Mammary epithelial cell (primary cell): ENCODE measurements at regions of chr21 and their contacts with region 1.

Region 1: GRCh38 chr21:34582506-34583150 is 32.3 kb downstream of the RCAN1 start:
- DNase-seq: peak; percentile 88
- H3K4me3 ChIP-seq: no peak overlapping the region
- H3K27ac ChIP-seq: peak overlapping the region; percentile 47
- H3K4me1 ChIP-seq: peaks cover 45% of the 10 kb centered on the region
- H3K27me3 ChIP-seq: no peaks in the 10 kb centered on the region
- CTCF ChIP-seq: peak; percentile 53 to 70

Region 2: DNA sequence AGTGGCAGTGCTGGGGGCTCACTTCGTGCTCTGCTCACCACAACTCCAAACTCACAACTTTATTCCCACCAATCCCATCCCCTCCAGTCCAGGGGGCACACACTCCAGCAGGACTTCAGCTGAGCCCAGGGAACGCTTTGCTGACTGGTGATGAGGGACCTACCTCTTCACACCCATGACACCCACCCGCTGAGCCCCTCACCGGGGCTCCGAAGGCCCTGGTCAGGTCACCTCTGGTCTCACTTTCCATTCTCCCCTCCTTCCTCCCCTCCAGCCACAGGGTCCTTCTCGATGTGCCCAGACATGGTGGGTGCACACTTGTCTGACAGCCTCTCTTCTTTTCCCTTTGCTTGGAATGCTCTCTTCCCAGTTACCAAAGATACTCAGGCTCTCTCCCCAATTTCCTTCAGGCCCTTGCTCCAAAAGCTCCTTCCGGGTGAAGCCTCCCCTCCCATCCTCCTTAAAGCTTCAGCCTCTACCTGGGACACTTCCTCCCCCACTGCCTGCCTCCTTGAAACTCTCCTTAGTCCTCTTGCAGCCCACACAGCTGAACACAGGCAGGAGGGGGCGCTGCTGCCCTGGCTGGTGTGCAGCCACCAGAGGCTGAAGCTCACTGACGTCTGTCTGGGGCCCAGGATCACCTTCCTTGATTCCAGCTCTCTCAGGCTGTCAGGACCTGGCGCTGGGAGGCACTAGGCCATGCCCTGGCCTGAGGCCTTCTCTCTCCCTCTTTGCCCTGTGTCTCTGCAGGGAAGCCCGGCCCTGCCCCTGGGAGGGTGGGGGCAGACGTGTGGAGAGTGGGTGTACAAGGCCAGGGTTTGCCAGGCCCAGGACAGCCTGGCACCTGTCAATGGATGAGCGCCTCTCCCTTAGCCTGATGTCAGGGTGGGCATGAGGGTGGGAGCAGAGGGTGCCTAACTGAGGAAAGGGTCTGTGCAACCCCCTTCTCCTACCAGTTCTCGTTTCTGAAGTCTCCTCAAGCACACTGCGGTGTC is 72.2 kb before region 1 on chr21:
- CTCF ChIA-PET with region 1: interaction called, 32 read pairs
- dilution Hi-C with region 1: no loop called
- in situ Hi-C with region 1: no loop called
- intact Hi-C with region 1: loop called (anchors 1 kb)
- DNase-seq: peak; percentile 39
- H3K4me3 ChIP-seq: no peak overlapping the region
- H3K27ac ChIP-seq: no peak overlapping the region
- H3K4me1 ChIP-seq: no peaks in the 10 kb centered on the region
- H3K27me3 ChIP-seq: no peaks in the 10 kb centered on the region
- CTCF ChIP-seq: peak; percentile 75 to 90

Region 3: GRCh38 chr21:34526618-34527290 is 55.9 kb before region 1 on chr21:
- CTCF ChIA-PET with region 1: interaction called, 4 read pairs
- dilution Hi-C with region 1: loop called (anchors 5 kb)
- in situ Hi-C with region 1: no loop called
- intact Hi-C with region 1: loop called (anchors 2 kb)
- DNase-seq: peak; percentile 98
- H3K4me3 ChIP-seq: peak overlapping the region; percentile 51 to 81 (median 65)
- H3K27ac ChIP-seq: peak overlapping the region; percentile 99
- H3K4me1 ChIP-seq: peaks cover 18% of the 10 kb centered on the region
- H3K27me3 ChIP-seq: no peaks in the 10 kb centered on the region
- CTCF ChIP-seq: no peak

Region 4: GRCh38 chr21:34545079-34545884 is 37.3 kb before region 1 on chr21:
- CTCF ChIA-PET with region 1: no interaction called
- dilution Hi-C with region 1: no loop called
- in situ Hi-C with region 1: no loop called
- intact Hi-C with region 1: loop called (anchors 2 kb)
- DNase-seq: peak; percentile 25
- H3K4me3 ChIP-seq: no peak overlapping the region
- H3K27ac ChIP-seq: peak overlapping the region; percentile 2
- H3K4me1 ChIP-seq: peaks cover 11% of the 10 kb centered on the region
- H3K27me3 ChIP-seq: no peaks in the 10 kb centered on the region
- CTCF ChIP-seq: no peak

Region 5: DNA sequence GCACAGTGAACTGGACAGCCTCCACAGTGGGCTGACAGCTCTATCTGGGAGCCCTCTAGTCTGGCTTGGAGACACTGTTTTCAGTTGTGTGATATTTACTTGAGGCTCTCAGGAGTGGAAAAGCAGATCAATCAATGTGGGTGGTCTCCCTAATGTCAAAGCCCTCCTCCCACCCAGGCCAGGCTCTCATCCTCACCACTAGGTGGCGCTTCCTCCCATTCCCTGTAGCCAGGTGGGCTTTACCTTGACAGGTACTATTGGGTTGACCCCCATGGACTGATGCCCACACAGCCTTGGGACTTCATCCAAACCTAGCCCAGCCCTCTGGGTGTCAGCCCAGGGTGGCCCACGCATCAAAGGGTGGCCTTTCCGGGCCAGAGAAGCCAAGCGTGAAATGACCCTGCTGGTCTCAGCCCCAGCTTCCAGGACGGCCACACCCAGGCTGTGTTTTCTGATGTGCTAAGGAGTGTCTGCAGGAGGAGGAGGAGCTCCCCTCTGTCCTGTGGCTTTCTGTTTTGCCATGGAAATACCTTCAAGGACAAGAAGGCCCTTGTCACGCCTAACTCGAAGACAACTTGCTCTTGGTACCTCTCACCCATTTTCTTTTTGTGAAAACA is 140.2 kb after region 1 on chr21:
- CTCF ChIA-PET with region 1: no interaction called
- dilution Hi-C with region 1: no loop called
- in situ Hi-C with region 1: no loop called
- intact Hi-C with region 1: no loop called
- DNase-seq: no peak
- H3K4me3 ChIP-seq: no peak overlapping the region
- H3K27ac ChIP-seq: no peak overlapping the region
- H3K4me1 ChIP-seq: no peaks in the 10 kb centered on the region
- H3K27me3 ChIP-seq: no peaks in the 10 kb centered on the region
- CTCF ChIP-seq: peak; percentile 59 to 80